OCI-LY7 (cell line): ENCODE measurements at regions of chr6 and their contacts with region 1.

Region 1: GRCh38 chr6:139134817-139135581 is at the start of gene HECA:
- DNase-seq: peak; percentile 95
- H3K4me3 ChIP-seq: peak within 1 kb of the TSS; percentile 87
- H3K27ac ChIP-seq: peak within 1 kb of the TSS; percentile 78
- H3K4me1 ChIP-seq: peaks cover 49% of the 10 kb centered on the region
- CTCF ChIP-seq: no peak
- total RNA-seq, gene HECA: 15.7 and 21.9 TPM in 2 replicates

Region 2: GRCh38 chr6:138999954-139000725 is 134.9 kb before region 1 on chr6:
- CTCF ChIA-PET with region 1: no interaction called
- POLR2A ChIA-PET with region 1: no interaction called
- intact Hi-C with region 1: no loop called
- DNase-seq: no peak
- H3K4me3 ChIP-seq: no peak overlapping the region
- H3K27ac ChIP-seq: no peak overlapping the region
- H3K4me1 ChIP-seq: peaks cover 4% of the 10 kb centered on the region
- CTCF ChIP-seq: no peak

Region 3: DNA sequence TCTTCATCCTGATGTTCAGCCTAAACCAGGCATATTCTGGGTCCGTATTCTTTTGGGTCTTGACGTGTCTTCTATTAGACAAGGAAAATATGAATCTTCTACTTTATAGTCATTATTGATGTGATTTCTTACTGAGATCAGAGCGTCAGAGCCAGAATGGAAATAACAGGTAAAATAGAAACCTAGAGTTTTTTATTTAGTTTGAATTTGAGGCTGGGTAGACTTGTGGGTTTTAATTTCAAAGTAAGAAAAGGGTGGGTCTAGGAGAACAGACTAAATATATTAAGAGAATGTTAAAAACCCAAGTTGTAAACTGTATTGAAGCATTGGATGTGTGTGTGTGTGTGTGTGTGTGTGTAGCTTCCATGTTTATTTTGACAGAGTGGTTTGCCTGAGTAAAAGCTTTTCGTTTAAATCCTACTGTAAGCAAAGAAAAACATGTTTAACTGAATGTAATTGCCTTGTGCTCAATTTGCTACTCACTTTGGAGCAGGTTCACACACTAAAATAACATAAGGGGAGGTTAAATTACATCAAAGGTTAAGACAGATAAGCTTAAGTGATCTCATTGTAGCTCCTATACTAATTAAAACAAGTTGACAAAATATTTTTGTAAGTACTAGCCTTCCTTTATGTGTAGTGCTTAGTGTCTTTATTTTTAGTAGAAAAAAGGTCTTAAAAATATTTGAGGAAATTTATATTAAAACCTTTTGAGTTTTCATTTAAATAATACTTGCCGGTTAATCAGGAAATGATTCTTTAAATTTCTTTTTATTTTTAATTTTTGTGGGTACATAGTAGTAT is 17.3 kb after region 1 on chr6:
- CTCF ChIA-PET with region 1: interaction called, 5 read pairs
- POLR2A ChIA-PET with region 1: interaction called, 10 read pairs
- intact Hi-C with region 1: no loop called
- DNase-seq: no peak
- H3K4me3 ChIP-seq: no peak overlapping the region
- H3K27ac ChIP-seq: no peak overlapping the region
- H3K4me1 ChIP-seq: peaks cover 7% of the 10 kb centered on the region
- CTCF ChIP-seq: no peak

Region 4: DNA sequence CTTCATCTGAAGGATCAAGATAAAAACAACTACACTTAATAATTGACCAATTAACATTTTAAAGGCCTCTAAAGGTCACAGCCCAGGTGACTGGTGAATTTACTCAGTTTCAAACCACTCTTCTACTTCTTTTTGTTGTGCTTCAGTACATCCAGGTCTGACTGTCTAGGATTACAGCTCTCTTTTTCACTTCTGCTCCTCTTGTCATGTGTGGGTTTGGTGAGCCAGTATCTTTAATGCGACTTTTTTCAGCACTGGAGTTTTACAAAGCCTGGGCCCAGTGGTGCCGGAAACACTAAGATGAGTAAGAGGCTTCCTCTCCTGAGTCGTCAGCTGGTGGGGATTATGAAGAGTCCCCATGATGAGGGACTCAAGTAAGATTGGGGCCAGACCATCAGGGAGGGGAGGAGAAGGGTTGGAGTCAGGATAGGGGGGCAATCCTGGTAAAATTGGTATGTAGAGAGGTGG is 26.9 kb after region 1 on chr6:
- CTCF ChIA-PET with region 1: no interaction called
- POLR2A ChIA-PET with region 1: interaction called, 10 read pairs
- intact Hi-C with region 1: no loop called
- DNase-seq: peak; percentile 71
- H3K4me3 ChIP-seq: no peak overlapping the region
- H3K27ac ChIP-seq: peak overlapping the region; percentile 55
- H3K4me1 ChIP-seq: peaks cover 53% of the 10 kb centered on the region
- CTCF ChIP-seq: no peak

Region 5: GRCh38 chr6:140711019-140711613 is 1576.1 kb after region 1 on chr6:
- CTCF ChIA-PET with region 1: no interaction called
- POLR2A ChIA-PET with region 1: no interaction called
- intact Hi-C with region 1: loop called (anchors 10 kb)
- DNase-seq: peak; percentile 68
- H3K4me3 ChIP-seq: peak overlapping the region; percentile 50
- H3K27ac ChIP-seq: peak overlapping the region; percentile 96
- H3K4me1 ChIP-seq: peaks cover 21% of the 10 kb centered on the region
- CTCF ChIP-seq: no peak